GM12878 (cell line): ENCODE measurements at regions of chr13 and their contacts with region 1.

Region 1: GRCh38 chr13:77565635-77566034 is 30.1 kb downstream of the SCEL start:
- DNase-seq: no peak
- ATAC-seq: peak; percentile 95
- H3K4me3 ChIP-seq: no peak overlapping the region
- H3K27ac ChIP-seq: no peak overlapping the region
- H3K4me1 ChIP-seq: no peaks in the 10 kb centered on the region
- H3K27me3 ChIP-seq: no peaks in the 10 kb centered on the region
- CTCF ChIP-seq: peak; percentile 44 to 76 (median 52); a peak in 5 of 6 replicates
- EP300 ChIP-seq: no peak
- POLR2A ChIP-seq: no peak
- RAD21 ChIP-seq: peak; percentile 95

Region 2: GRCh38 chr13:77184455-77184854 is 381.2 kb before region 1 on chr13:
- CTCF ChIA-PET with region 1: no interaction called
- POLR2A ChIA-PET with region 1: no interaction called
- RAD21 ChIA-PET with region 1: no interaction called
- SMC1A ChIA-PET with region 1: no interaction called
- in situ Hi-C with region 1: no loop called
- intact Hi-C with region 1: loop called (anchors 5 kb)
- DNase-seq: peak; percentile 87
- ATAC-seq: peak; percentile 94
- H3K4me3 ChIP-seq: no peak overlapping the region
- H3K27ac ChIP-seq: peak overlapping the region; percentile 64
- H3K4me1 ChIP-seq: peaks cover 12% of the 10 kb centered on the region
- H3K27me3 ChIP-seq: no peaks in the 10 kb centered on the region
- CTCF ChIP-seq: no peak
- EP300 ChIP-seq: peak in 1 of 2 experiments; percentile 68; a peak in 2 of 4 replicates
- POLR2A ChIP-seq: no peak
- RAD21 ChIP-seq: no peak

Region 3: GRCh38 chr13:77506874-77507273 is 58.8 kb before region 1 on chr13:
- CTCF ChIA-PET with region 1: interaction called, 61 read pairs
- POLR2A ChIA-PET with region 1: no interaction called
- RAD21 ChIA-PET with region 1: interaction called, 7 read pairs
- SMC1A ChIA-PET with region 1: interaction called, 85 read pairs
- in situ Hi-C with region 1: no loop called
- intact Hi-C with region 1: no loop called
- DNase-seq: no peak
- ATAC-seq: no peak
- H3K4me3 ChIP-seq: no peak overlapping the region
- H3K27ac ChIP-seq: no peak overlapping the region
- H3K4me1 ChIP-seq: peaks cover 17% of the 10 kb centered on the region
- H3K27me3 ChIP-seq: no peaks in the 10 kb centered on the region
- CTCF ChIP-seq: peak; percentile 16 to 32 (median 22); a peak in 3 of 6 replicates
- EP300 ChIP-seq: no peak
- POLR2A ChIP-seq: no peak
- RAD21 ChIP-seq: peak; percentile 18; the same call in 1 of the 2 replicates

Region 4: GRCh38 chr13:77516342-77516789 is 49.3 kb before region 1 on chr13:
- CTCF ChIA-PET with region 1: interaction called, 9 read pairs
- POLR2A ChIA-PET with region 1: no interaction called
- RAD21 ChIA-PET with region 1: interaction called, 3 read pairs
- SMC1A ChIA-PET with region 1: interaction called, 10 read pairs
- in situ Hi-C with region 1: no loop called
- intact Hi-C with region 1: no loop called
- DNase-seq: no peak
- ATAC-seq: peak; percentile 57
- H3K4me3 ChIP-seq: no peak overlapping the region
- H3K27ac ChIP-seq: no peak overlapping the region
- H3K4me1 ChIP-seq: peaks cover 14% of the 10 kb centered on the region; the same call in 1 of the 2 replicates
- H3K27me3 ChIP-seq: no peaks in the 10 kb centered on the region
- CTCF ChIP-seq: no peak
- EP300 ChIP-seq: no peak
- POLR2A ChIP-seq: no peak
- RAD21 ChIP-seq: no peak

Region 5: DNA sequence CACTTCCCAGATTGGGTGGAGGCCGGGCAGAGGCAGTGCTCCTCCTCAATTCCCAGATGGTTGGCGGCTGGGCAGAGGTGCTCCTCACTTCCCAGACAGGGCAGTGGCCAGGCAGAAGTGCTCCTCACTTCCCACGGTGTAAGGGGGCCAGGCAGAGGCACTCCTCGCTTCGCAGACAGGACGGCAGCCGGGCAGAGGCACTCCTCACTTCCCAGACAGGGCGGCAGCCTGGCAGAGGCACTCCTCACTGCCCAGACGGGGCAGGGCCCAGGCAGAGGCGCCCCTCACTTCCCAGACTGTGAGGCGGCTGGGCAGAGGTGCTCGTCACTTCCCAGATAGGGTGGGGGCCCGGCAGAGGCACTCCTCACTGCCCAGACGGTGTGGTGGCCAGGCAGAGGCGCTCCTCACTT is 95.2 kb after region 1 on chr13:
- CTCF ChIA-PET with region 1: no interaction called
- POLR2A ChIA-PET with region 1: no interaction called
- RAD21 ChIA-PET with region 1: no interaction called
- SMC1A ChIA-PET with region 1: no interaction called
- in situ Hi-C with region 1: no loop called
- intact Hi-C with region 1: no loop called
- DNase-seq: no peak
- ATAC-seq: no peak
- H3K4me3 ChIP-seq: no peak overlapping the region
- H3K27ac ChIP-seq: no peak overlapping the region
- H3K4me1 ChIP-seq: no peaks in the 10 kb centered on the region
- H3K27me3 ChIP-seq: no peaks in the 10 kb centered on the region
- CTCF ChIP-seq: no peak
- EP300 ChIP-seq: no peak
- POLR2A ChIP-seq: no peak
- RAD21 ChIP-seq: no peak